ENCODE measurements at regions of chr12 and their contacts with region 1.

Region 1: DNA sequence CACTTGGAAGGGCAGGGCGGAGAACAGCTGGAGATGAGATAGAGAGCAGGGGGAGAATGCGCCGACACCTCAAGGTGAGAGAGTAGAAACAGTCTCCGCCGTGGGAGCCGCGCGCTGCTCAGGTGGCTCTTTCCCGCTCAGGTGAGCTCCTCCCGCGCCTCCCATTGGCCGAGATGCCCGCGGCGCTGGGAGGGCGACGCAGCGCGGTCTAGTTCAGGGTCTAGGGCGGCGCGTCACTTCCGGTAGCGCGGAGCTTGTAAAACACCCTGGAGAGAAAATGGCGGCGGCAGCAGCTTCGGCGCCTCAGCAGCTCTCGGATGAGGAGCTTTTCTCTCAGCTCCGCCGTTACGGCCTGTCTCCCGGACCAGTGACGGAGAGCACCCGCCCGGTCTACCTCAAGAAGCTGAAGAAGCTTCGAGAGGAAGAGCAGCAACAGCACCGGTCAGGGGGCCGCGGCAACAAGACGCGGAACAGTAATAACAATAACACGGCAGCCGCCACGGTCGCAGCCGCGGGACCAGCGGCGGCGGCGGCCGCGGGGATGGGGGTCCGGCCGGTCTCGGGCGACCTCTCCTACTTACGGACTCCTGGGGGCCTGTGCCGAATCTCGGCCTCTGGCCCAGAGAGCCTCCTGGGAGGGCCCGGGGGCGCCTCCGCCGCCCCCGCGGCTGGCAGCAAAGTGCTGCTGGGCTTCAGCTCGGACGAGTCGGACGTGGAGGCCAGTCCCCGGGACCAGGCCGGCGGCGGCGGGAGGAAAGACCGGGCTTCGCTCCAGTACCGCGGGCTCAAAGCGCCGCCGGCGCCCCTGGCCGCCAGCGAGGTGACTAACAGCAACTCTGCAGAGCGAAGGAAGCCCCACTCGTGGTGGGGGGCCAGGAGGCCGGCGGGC is at the start of gene LEMD3:
- DNase-seq: peak; percentile 97
- ATAC-seq: peak; percentile 93
- H3K4me3 Mint-ChIP-seq: peak within 1 kb of the TSS; percentile 93
- H3K27ac Mint-ChIP-seq: peak within 1 kb of the TSS; percentile 96
- H3K4me1 Mint-ChIP-seq: peaks cover 26% of the 10 kb centered on the region
- H3K27me3 Mint-ChIP-seq: no peaks in the 10 kb centered on the region
- CTCF ChIP-seq: no peak
- total RNA-seq, gene LEMD3: 19.5 to 23.2 TPM

Region 2: GRCh38 chr12:65156366-65156841 is 13.2 kb before region 1 on chr12:
- CTCF ChIA-PET with region 1: interaction called, 15 read pairs
- POLR2A ChIA-PET with region 1: interaction called, 8 read pairs
- intact Hi-C with region 1: no loop called
- DNase-seq: peak; percentile 54
- ATAC-seq: peak; percentile 82
- H3K4me3 Mint-ChIP-seq: peak overlapping the region; percentile 45
- H3K27ac Mint-ChIP-seq: peak overlapping the region; percentile 85
- H3K4me1 Mint-ChIP-seq: peaks cover 17% of the 10 kb centered on the region
- H3K27me3 Mint-ChIP-seq: peaks cover 11% of the 10 kb centered on the region
- CTCF ChIP-seq: no peak

Region 3: DNA sequence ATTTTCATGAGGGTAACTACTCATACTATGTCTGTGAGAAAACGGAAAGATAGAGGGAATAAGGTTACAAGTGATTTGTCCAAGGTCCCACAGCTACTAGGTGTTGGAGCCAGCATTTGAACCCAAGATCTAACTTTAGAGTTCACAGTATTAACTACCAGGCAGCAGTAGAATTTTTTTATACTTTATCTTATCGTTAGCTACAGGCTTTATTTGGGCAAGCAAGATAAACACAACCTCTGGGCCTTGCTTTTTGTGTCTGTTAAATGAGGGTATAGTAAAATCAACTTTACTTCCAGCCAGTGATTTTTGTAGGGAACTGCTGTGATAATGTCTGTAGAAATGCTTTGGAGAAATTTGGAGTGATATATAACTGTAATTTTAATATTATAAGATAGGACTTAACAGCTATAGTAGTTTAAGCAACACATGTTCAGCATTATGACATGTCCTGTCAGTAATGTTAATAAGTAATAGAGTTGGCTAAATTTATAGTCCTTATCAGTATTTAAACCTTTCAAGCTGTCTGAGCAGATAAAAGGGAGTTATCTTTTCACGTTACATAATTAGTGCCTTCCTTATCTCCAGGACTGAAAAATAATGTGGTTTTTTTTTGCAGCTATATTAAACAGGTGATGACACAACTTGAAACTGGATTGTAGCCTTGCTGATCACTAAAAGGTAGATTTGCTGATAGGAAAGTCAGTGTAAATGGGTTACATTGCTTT is 12.6 kb after region 1 on chr12:
- CTCF ChIA-PET with region 1: interaction called, 5 read pairs
- POLR2A ChIA-PET with region 1: interaction called, 13 read pairs
- intact Hi-C with region 1: no loop called
- DNase-seq: no peak
- ATAC-seq: no peak
- H3K4me3 Mint-ChIP-seq: no peak overlapping the region
- H3K27ac Mint-ChIP-seq: no peak overlapping the region
- H3K4me1 Mint-ChIP-seq: peaks cover 47% of the 10 kb centered on the region
- H3K27me3 Mint-ChIP-seq: no peaks in the 10 kb centered on the region
- CTCF ChIP-seq: no peak

Region 4: DNA sequence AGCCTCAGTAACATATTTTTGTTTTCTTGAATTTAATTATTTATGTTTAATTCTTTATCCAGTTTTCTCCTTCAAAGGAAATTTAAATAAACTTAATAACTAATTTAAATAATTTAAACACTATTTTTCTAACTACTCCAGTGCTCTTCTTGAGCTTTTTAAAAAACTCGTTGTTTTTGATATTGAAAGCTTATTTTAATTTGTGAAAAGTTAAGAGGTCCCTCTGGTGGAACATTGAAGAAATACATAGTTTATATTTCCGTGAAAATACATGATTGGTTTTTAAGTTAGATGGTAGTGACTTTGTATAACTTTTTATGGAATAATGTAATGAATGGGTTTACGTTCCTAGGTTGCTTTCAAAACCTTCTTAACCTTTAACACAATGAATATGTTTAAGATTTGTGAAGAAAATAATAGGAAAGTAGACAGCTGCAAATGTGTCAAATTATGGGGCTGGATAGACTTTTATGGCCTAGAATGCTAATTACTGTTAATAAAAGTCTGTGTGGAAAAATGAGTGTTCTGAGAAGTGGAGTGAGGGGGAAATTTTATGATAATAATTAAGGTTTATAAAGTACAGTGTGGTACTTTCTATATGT is 63.0 kb after region 1 on chr12:
- CTCF ChIA-PET with region 1: interaction called, 10 read pairs
- POLR2A ChIA-PET with region 1: interaction called, 6 read pairs
- intact Hi-C with region 1: loop called (anchors 2 kb)
- DNase-seq: no peak
- ATAC-seq: no peak
- H3K4me3 Mint-ChIP-seq: no peak overlapping the region
- H3K27ac Mint-ChIP-seq: no peak overlapping the region
- H3K4me1 Mint-ChIP-seq: peaks cover 10% of the 10 kb centered on the region
- H3K27me3 Mint-ChIP-seq: no peaks in the 10 kb centered on the region
- CTCF ChIP-seq: peak; percentile 63